ENCODE measurements at regions of chr6 and their contacts with region 1.

Region 1: DNA sequence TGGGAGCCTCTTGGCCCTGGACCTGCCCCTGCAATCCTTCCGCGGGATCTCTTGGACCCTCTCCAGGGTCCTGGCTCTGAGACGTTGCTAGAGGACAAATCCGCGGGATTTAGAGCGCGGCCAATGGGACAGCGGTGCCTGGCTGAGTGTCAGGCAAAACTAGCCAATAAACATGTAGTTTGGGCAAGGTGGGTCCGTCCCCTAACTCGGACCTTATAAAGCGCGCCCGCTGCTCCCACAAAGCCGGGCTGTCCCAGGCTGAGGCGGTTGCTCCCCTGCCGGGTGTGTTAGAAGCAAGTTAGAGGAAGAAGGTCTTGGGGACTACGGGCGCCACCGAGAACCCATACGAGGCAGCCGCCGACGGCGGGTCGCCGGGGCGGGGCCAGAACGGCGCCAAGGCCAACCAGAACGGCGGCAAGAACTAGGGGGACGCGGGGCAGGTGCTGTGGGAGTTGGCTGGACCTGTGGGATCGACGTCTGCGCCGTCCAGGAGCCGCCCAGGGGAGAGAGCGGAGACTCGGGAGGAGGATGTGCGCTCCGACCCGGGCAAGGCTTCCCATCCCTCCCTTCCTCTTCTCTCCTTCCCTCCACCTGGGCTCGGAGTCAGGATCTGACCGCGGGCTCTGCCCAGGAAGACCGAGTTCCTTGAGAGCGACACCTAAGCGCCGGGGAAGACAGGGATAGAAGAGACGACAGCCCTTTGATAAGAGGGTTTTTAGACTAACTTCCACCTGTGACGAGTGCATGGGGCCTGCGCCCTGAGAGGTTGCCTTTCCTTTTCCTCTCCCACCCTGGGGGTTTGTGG is 6.5 kb upstream of the TMEM14A start:
- DNase-seq: peak; percentile 95
- H3K4me3 ChIP-seq: peak overlapping the region; percentile 46 to 92 (median 54)
- H3K27ac ChIP-seq: peak overlapping the region; percentile 39
- H3K4me1 ChIP-seq: peaks cover 15% of the 10 kb centered on the region
- H3K27me3 ChIP-seq: no peaks in the 10 kb centered on the region
- CTCF ChIP-seq: no peak
- POLR2A ChIP-seq: peak; percentile 96

Region 2: DNA sequence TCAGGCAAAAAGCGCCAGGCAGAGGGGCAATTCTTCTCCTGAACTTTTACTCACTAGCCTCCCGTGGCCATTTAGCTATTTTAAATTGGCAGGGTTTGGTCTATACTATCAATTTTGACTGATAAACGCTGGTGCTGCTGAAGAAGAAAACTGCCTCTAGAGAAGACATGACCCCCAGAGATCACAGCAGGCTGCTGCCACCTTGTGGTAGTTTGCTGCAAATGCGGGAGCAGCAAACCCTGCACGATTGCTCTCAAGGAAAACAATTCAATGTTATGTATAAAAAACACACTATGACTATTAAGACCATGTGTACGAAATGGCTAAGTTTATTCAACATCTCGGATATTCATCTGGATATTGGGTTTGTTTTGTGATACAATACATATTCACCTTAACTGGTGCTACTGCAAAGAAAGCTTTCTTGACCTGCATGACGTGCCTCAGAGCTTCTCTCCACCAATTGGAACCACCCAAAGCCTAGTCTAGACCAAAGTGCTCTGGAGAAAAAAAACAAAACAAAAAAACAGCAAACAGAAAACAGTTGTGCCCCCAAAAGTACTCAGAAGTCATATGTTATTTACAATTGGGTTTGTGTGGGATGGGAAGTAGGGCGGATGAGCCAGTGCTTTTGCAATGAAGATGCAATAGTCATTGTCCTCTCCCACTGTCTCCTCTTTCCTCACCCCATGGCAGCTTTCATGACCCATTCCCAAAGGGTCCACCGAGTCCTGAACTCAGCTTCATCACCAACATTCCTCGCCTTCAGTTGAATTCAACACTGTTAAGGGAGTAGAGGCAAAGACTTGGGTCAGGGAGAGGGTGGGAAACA is 400.5 kb before region 1 on chr6:
- CTCF ChIA-PET with region 1: no interaction called
- POLR2A ChIA-PET with region 1: no interaction called
- dilution Hi-C with region 1: loop called (anchors 10 kb)
- intact Hi-C with region 1: no loop called
- DNase-seq: peak; percentile 70
- H3K4me3 ChIP-seq: no peak overlapping the region
- H3K27ac ChIP-seq: no peak overlapping the region
- H3K4me1 ChIP-seq: peaks cover 6% of the 10 kb centered on the region
- H3K27me3 ChIP-seq: no peaks in the 10 kb centered on the region
- CTCF ChIP-seq: peak; percentile 91 to 93
- POLR2A ChIP-seq: no peak

Region 3: GRCh38 chr6:52399511-52400312 is 264.7 kb before region 1 on chr6:
- CTCF ChIA-PET with region 1: interaction called, 13 read pairs
- POLR2A ChIA-PET with region 1: no interaction called
- dilution Hi-C with region 1: loop called (anchors 25 kb)
- intact Hi-C with region 1: no loop called
- DNase-seq: peak; percentile 59
- H3K4me3 ChIP-seq: no peak overlapping the region
- H3K27ac ChIP-seq: no peak overlapping the region
- H3K4me1 ChIP-seq: no peaks in the 10 kb centered on the region
- H3K27me3 ChIP-seq: no peaks in the 10 kb centered on the region
- CTCF ChIP-seq: peak; percentile 75 to 81
- POLR2A ChIP-seq: no peak

Region 4: GRCh38 chr6:52503848-52504781 is 160.3 kb before region 1 on chr6:
- CTCF ChIA-PET with region 1: no interaction called
- POLR2A ChIA-PET with region 1: no interaction called
- dilution Hi-C with region 1: no loop called
- intact Hi-C with region 1: loop called (anchors 2 kb)
- DNase-seq: peak; percentile 49
- H3K4me3 ChIP-seq: no peak overlapping the region
- H3K27ac ChIP-seq: peak overlapping the region; percentile 79
- H3K4me1 ChIP-seq: peaks cover 27% of the 10 kb centered on the region
- H3K27me3 ChIP-seq: no peaks in the 10 kb centered on the region
- CTCF ChIP-seq: no peak
- POLR2A ChIP-seq: no peak

Region 5: DNA sequence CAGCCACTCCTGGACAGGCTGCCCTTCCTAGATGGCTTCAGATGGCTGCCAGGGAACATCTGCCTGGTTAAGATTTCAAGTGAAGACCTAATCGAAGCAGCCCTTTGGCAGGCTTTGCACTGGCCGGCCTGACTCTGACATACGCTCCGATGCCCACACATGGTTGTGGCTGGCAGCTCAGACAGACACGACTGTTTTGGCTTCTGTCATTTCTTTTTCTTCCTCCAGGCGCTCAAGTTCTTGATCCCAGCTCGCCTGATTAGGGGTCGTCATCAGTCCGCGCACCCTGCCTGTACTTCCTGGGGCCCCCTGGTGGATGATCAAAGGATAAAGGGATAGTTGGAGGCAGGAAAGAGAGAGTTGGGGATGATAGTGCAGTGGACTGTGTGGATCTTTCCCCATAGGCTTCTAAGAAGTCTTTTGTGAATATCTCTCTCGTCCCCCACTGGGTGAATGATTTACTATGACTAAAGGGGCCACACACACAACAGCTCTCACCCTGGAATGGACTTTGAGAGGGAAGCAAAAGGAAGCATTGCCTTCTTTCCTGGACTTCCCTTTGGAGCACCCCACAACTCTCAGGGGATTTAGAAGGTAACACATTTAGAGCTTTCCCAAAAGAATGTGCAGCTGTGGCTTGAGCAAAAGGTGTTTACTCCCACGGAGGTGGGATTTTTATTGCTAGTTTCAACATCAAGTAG is 66.1 kb before region 1 on chr6:
- CTCF ChIA-PET with region 1: interaction called, 4 read pairs
- POLR2A ChIA-PET with region 1: no interaction called
- dilution Hi-C with region 1: no loop called
- intact Hi-C with region 1: loop called (anchors 2 kb)
- DNase-seq: peak; percentile 54
- H3K4me3 ChIP-seq: no peak overlapping the region
- H3K27ac ChIP-seq: no peak overlapping the region
- H3K4me1 ChIP-seq: peaks cover 34% of the 10 kb centered on the region
- H3K27me3 ChIP-seq: no peaks in the 10 kb centered on the region
- CTCF ChIP-seq: peak; percentile 63 to 75
- POLR2A ChIP-seq: no peak